Breast epithelium (tissue), 4 donors: ENCODE measurements at regions of chr15 and their contacts with region 1.

Region 1: DNA sequence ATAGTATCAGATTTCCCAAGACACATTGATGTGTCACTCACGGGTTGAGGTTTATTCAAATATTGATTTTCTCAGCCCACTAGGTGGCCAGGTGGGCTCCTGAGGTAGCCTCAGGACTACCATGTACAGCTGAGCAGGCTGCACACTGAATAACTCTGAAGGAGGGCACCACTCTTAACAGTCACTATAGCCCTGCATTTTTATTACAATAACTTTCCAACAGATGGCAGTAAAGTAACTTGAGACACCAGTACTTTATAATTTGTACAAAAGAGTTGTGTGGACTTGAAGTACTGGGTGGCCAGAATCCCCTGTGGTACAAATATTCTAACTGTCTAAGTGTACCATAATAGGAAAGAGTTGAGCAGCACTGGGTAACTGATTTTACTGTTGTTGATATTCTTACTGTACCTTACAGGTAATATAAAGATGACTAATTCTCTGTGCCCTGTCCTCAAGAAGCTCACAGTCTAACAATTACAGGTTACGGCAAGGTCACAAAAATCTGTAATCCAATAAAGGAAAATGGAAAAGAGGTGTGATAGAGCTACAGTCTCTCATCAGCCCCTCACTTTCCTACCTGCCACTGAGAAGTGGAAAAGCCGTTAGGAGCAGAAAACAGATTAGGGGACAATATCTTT is 76.0 kb downstream of the ETFA start:
- DNase-seq: no peak
- H3K4me3 ChIP-seq: no peak overlapping the region
- H3K27ac ChIP-seq: no peak overlapping the region
- H3K4me1 ChIP-seq: no peaks in the 10 kb centered on the region
- H3K27me3 ChIP-seq: no peaks in the 10 kb centered on the region
- CTCF ChIP-seq: peak in 1 of 3 donors; percentile 27
- POLR2A ChIP-seq: no peak

Region 2: GRCh38 chr15:76127880-76128279 is 107.4 kb before region 1 on chr15:
- intact Hi-C with region 1: loop called (anchors 10 kb)
- DNase-seq: no peak
- H3K4me3 ChIP-seq: no peak overlapping the region
- H3K27ac ChIP-seq: no peak overlapping the region
- H3K4me1 ChIP-seq: no peaks in the 10 kb centered on the region
- H3K27me3 ChIP-seq: no peaks in the 10 kb centered on the region
- CTCF ChIP-seq: no peak
- POLR2A ChIP-seq: no peak